Aorta (tissue), 5 donors: ENCODE measurements at regions of chr11 and their contacts with region 1.

Region 1: GRCh38 chr11:65888163-65888814 is at the start of gene FIBP:
- DNase-seq: peak; percentile 99
- ATAC-seq: peak; percentile 90
- H3K4me3 ChIP-seq: peak within 1 kb of the TSS; percentile 25 to 57
- H3K27ac ChIP-seq: peak within 1 kb of the TSS; percentile 88 to 97
- H3K4me1 ChIP-seq: peaks cover 0 to 3% of the 10 kb centered on the region in 2 donors
- H3K27me3 ChIP-seq: peaks cover 0 to 5% of the 10 kb centered on the region in 2 donors
- total RNA-seq, gene FIBP: 40.2 to 47.7 TPM

Region 2: GRCh38 chr11:65700391-65700790 is 187.9 kb before region 1 on chr11:
- intact Hi-C with region 1: no loop called
- DNase-seq: no peak
- ATAC-seq: no peak
- H3K4me3 ChIP-seq: no peak overlapping the region
- H3K27ac ChIP-seq: no peak overlapping the region
- H3K4me1 ChIP-seq: no peaks in the 10 kb centered on the region
- H3K27me3 ChIP-seq: no peaks in the 10 kb centered on the region

Region 3: GRCh38 chr11:65919146-65920033 is 31.1 kb after region 1 on chr11 and contains the start of gene DRAP1:
- intact Hi-C with region 1: loop called (anchors 2 to 5 kb)
- DNase-seq: peak; percentile 99 to 100
- ATAC-seq: peak; percentile 95
- H3K4me3 ChIP-seq: peak within 1 kb of the TSS; percentile 68 to 89
- H3K27ac ChIP-seq: peak within 1 kb of the TSS; percentile 83 to 91
- H3K4me1 ChIP-seq: peaks cover 0 to 1% of the 10 kb centered on the region in 2 donors
- H3K27me3 ChIP-seq: no peaks in the 10 kb centered on the region
- total RNA-seq, gene DRAP1: 65.9 to 86.4 TPM

Region 4: GRCh38 chr11:65961232-65961901 is 73.1 kb after region 1 on chr11 and contains the start of gene SART1:
- intact Hi-C with region 1: loop called in 1 of 2 experiments (anchors 2 kb)
- DNase-seq: peak; percentile 99
- ATAC-seq: peak; percentile 97
- H3K4me3 ChIP-seq: peak within 1 kb of the TSS; percentile 74 to 86
- H3K27ac ChIP-seq: peak within 1 kb of the TSS; percentile 11 to 59
- H3K4me1 ChIP-seq: no peaks in the 10 kb centered on the region
- H3K27me3 ChIP-seq: no peaks in the 10 kb centered on the region
- total RNA-seq, gene SART1: 50.9 to 52.3 TPM

Region 5: DNA sequence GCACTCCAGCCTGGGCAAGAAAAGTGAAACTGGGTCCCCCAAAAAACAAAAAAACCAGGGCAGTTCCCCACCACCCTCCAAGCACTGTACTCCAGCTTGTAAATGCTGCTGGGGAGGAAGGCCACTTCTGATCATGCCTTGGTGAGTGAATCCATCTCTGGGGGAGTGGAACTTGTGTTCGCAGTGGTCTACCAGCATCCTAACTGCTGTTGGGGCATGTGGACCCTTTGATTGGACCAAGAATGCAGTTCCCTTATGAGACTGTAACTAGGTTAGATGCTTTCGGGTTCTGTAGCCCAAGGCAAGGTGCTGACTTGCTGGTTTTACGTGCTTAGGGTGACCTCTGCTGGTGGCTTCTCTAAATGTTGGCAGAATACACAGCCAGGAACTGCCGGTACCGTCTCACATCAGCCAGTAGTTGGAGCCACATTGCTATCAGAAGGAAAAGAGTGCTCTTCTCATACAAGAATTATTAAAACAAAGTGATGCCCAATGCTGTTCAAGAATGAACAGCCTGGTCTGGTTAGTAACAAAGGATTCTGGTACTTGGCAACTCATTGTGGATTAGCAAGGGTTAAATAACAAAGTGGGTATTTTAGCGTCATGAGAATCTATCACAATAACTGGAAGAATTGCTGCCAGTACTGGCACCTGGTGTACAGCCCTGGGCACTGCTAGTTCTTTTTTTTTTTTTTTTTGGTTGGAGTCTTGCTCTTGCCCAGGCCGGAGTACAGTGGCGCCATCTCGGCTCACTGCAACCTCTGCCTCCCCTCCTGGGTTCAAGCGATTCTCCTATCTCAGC is 100.7 kb after region 1 on chr11:
- intact Hi-C with region 1: loop called (anchors 2 kb)
- DNase-seq: peak; percentile 87 to 92
- ATAC-seq: peak; percentile 96
- H3K4me3 ChIP-seq: no peak overlapping the region
- H3K27ac ChIP-seq: no peak overlapping the region
- H3K4me1 ChIP-seq: no peaks in the 10 kb centered on the region
- H3K27me3 ChIP-seq: no peaks in the 10 kb centered on the region

Region 6: DNA sequence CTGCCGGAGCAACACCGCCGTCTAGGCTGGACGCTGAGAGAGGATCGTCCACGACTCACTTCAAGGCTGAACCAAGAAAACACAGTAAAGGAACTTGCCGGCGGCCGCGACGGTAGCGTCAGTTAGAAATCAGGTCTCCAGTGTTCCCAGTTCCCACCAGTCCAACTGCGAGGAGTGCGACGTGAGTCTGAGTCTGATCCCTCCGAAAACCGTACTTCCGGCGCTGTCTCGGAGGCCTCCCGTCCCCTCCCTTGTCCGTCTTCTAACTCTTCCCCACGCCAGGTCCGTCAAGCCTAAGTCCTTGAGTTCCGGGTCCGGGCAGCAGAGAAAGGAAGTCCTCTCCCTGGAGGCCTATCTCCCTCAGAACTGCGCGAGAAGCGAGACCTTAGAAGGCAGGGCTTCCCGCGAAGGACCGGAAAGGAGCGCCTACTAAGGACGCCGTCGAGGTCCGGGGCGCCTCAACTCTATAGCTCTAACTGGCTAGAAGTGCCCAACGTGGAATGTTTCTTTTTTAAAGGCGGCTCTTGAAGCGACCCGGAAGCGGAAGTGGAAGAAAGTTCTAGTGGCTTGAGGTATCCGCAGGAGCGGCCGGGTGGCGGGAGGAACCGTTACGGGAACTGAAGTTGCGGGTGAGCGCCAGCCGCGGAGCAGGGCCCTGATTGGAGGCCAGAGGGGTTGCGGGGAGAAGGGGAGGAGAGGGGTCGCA is 113.8 kb after region 1 on chr11 and contains the starts of genes BANF1 and EIF1AD:
- intact Hi-C with region 1: loop called in 1 of 2 experiments (anchors 5 kb)
- DNase-seq: peak; percentile 94 to 95
- ATAC-seq: peak; percentile 96
- H3K4me3 ChIP-seq: peak within 1 kb of the TSS; percentile 72 to 95
- H3K27ac ChIP-seq: peak within 1 kb of the TSS; percentile 65 to 95
- H3K4me1 ChIP-seq: no peaks in the 10 kb centered on the region
- H3K27me3 ChIP-seq: no peaks in the 10 kb centered on the region
- total RNA-seq, gene BANF1: 136 to 145 TPM
- total RNA-seq, gene EIF1AD: 28.7 to 35.0 TPM

Region 7: GRCh38 chr11:66022401-66023185 is 134.3 kb after region 1 on chr11:
- intact Hi-C with region 1: loop called in 1 of 2 experiments (anchors 10 kb)
- DNase-seq: peak; percentile 83 to 94
- ATAC-seq: peak; percentile 90
- H3K4me3 ChIP-seq: no peak overlapping the region
- H3K27ac ChIP-seq: no peak overlapping the region
- H3K4me1 ChIP-seq: no peaks in the 10 kb centered on the region
- H3K27me3 ChIP-seq: no peaks in the 10 kb centered on the region